Activated CD4-positive, alpha-beta T cell treated with anti-CD3 and anti-CD28 coated beads, Interleukin-2, amount 10 ng/mL, durations not matched to agents 24 days and 14 days (primary cell): ENCODE measurements at regions of chr17 and their contacts with region 1.

Region 1: DNA sequence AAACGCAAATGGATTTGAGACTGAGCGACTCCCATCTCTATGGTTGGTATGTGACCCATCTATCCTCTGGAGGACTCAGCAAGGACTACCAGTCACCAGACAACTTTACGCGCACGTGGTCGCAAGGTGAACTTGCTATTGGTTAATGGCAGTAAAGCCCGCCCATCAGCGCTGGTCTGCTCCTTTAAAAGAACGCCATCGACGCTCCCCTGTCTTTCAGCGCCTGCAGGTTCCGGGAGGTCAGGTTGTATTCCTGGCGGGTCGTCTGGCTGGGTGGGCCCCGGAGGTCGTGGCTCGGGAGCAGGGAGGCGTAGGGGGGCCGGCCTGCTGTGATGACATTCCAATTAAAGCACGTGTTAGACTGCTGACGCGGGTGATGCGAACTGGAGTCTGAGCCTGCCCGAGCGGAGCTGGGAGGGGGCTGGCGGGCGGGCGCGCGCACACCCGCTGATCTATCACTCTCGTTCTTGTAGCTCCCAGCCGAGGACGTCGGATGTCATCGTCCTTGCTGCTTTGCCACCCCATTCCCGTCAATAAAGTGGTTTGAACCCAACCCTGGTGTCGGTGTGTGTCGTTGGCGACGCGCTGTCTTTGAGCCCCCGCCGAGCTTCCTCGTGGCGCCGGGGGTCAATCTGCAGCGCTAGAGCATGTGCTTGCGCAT is 15.9 kb upstream of the ERN1 start:
- DNase-seq: peak; percentile 98
- H3K4me3 Mint-ChIP-seq: no peak overlapping the region
- H3K27ac Mint-ChIP-seq: no peak overlapping the region
- H3K4me1 Mint-ChIP-seq: peaks cover 25% of the 10 kb centered on the region
- H3K27me3 Mint-ChIP-seq: no peaks in the 10 kb centered on the region

Region 2: GRCh38 chr17:63842540-63843386 is 303.1 kb before region 1 on chr17 and contains the start of gene SMARCD2:
- intact Hi-C with region 1: loop called (anchors 5 kb)
- DNase-seq: peak; percentile 99
- H3K4me3 Mint-ChIP-seq: peak within 1 kb of the TSS; percentile 98
- H3K27ac Mint-ChIP-seq: peak within 1 kb of the TSS; percentile 93
- H3K4me1 Mint-ChIP-seq: peaks cover 27% of the 10 kb centered on the region
- H3K27me3 Mint-ChIP-seq: no peaks in the 10 kb centered on the region
- total RNA-seq, gene SMARCD2: 120 and 121 TPM in 2 replicates

Region 3: GRCh38 chr17:64198331-64199090 is 52.6 kb after region 1 on chr17:
- intact Hi-C with region 1: loop called (anchors 1 kb)
- DNase-seq: no peak
- H3K4me3 Mint-ChIP-seq: no peak overlapping the region
- H3K27ac Mint-ChIP-seq: no peak overlapping the region
- H3K4me1 Mint-ChIP-seq: peaks cover 26% of the 10 kb centered on the region
- H3K27me3 Mint-ChIP-seq: no peaks in the 10 kb centered on the region

Region 4: DNA sequence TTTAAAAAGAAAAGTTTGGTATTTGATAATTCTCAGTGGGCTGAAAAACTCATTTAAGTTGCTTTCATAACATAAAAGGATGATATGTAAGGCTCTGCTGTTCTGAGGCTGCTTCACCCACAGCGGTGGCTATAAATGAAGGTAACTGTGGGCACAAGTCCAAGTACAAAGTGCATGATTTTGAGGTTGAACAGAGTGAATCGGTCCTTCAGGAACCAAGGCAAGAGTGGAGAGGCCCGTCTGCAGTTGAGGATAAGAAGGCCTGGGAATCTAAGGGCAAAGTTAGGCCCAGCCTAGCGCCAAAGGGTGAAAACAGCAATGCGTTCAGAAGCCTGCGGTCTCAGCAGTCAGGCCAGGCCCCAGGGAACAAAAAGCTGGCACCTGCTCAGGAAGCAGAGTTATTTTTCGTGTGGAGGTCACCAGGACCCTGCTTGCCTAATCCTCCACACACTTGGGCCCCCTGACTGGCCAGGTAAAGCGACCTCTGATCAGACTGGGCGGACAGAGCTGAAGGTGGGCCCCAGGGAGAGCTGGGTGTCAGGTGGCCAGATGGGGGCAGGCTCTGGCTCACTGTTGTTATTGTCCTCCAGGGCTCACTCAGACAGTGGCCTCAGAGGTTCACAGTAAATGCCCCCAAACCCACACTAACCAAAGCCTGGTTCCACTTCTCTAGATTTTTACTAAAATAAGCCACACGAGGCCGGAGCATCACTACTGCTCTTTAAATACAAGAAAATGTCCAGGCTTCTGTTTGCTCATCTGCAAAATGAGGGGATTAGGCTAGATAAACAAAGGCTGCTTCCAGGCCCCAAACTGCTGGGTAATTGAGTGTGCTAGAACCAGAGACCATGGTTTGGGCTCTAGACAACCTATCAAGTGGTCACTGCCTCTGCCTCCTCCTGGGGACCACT is 70.7 kb after region 1 on chr17:
- intact Hi-C with region 1: loop called (anchors 5 kb)
- DNase-seq: no peak
- H3K4me3 Mint-ChIP-seq: no peak overlapping the region
- H3K27ac Mint-ChIP-seq: no peak overlapping the region
- H3K4me1 Mint-ChIP-seq: peaks cover 11% of the 10 kb centered on the region
- H3K27me3 Mint-ChIP-seq: no peaks in the 10 kb centered on the region

Region 5: GRCh38 chr17:64262417-64263260 is 116.8 kb after region 1 on chr17 and contains the start of gene TEX2:
- intact Hi-C with region 1: loop called (anchors 1 kb)
- DNase-seq: peak; percentile 90
- H3K4me3 Mint-ChIP-seq: peak within 1 kb of the TSS; percentile 89
- H3K27ac Mint-ChIP-seq: peak within 1 kb of the TSS; percentile 94
- H3K4me1 Mint-ChIP-seq: peaks cover 32% of the 10 kb centered on the region
- H3K27me3 Mint-ChIP-seq: peaks cover 16% of the 10 kb centered on the region
- total RNA-seq, gene TEX2: 22.2 and 23.9 TPM in 2 replicates

Region 6: DNA sequence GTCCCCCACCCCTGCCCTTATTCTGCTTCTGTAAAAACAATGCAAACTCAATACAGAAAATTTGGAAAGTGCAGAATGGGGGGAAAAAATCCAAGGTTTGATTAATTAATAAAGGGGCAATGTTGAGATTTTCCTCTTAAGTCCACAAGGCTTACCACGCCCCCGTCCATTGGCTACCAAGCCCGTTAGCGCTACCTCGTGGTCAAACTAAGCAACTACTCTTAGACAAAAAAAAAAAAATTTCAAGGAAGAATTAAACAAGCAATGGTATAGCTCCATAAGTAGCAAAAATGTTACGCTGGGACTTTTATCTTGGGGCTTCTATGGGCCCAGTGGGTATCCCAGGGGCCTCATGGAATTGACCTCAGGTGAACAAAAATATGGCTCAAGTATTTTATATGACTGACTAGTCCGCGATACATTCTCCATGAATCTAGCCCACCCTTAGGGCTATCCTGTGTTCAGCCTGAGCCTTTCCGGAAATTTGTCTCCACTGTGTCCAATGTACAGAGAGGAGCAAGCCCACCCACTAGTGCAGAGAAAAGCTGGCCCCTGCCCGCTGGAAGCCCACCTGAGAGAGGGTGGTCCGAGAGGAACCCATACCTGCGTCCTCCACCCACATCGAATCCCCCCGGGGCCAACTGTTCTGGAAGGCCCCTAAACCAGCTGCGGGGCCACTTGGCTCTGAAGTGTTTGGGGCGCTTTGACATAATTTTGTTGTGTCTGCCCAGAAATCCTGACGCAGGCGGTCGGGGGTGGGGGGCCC is 136.3 kb after region 1 on chr17:
- intact Hi-C with region 1: loop called (anchors 1 kb)
- DNase-seq: peak; percentile 85
- H3K4me3 Mint-ChIP-seq: no peak overlapping the region
- H3K27ac Mint-ChIP-seq: no peak overlapping the region
- H3K4me1 Mint-ChIP-seq: peaks cover 4% of the 10 kb centered on the region
- H3K27me3 Mint-ChIP-seq: no peaks in the 10 kb centered on the region